Left ventricle myocardium superior (tissue), 1 donor: ENCODE measurements at regions of chr2 and their contacts with region 1.

Region 1: GRCh38 chr2:117943013-117943672 is 70.7 kb downstream of the CCDC93 start:
- DNase-seq: no peak
- ATAC-seq: no peak

Region 2: GRCh38 chr2:117481608-117482007 is 461.5 kb before region 1 on chr2:
- intact Hi-C with region 1: no loop called
- DNase-seq: no peak
- ATAC-seq: no peak

Region 3: DNA sequence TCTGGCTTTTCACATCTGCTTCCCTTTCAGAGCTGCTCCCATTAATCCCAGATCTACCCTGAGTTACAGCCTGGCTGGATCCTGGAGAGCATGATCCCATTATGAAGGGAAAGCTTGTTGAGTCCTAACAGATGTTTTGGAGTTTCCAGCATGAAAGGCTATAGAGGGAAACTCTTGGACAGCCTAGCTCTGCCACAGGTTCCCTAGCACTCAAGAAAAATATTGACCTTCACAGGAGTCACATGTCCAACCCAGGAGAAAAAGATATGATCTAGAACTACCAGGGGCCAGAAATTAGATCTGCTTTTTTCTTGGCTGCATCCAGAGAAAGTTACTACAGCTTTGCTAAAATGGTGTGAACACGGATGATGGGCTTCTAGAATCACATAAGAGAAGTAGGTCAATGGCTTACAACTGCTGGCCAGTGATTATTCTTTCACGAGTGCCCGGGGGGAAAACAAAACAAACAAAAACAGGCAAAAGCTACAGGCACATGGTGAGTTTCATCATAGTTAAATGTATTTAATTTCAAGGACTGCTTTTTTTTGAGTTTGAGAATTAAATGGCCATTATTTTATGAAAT is 54.8 kb after region 1 on chr2:
- intact Hi-C with region 1: loop called (anchors 10 kb)
- DNase-seq: no peak
- ATAC-seq: peak; percentile 74